Lower leg skin (tissue), 4 donors: ENCODE measurements at regions of chr11 and their contacts with region 1.

Region 1: DNA sequence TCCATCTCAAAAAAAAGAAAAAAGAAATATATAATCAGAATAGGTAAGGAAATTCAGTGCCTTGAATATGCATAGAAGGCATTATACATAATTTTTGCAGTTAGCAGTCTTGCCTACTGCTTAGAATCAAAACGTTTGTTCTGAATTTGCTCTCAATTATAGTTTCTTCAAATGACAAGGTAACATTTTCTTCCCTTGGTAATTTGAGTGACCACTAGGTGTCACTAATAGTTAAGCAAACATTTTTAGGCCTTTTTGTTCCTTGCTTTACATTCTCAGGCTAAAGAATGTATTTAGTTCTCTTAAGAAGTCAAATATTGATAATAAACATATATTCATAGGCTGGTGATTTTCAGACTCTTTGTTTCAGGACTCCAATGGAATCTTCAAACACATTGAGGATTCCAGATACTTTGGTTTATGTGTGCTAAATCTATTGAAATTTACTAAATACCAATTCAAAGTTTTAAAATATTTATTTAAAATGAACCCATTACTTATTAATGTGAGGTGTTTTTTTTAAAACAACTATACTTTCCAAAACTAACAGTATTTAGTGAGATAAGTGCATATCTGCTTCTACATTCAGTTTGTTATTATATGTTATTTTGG is 55.0 kb upstream of the DEPDC7 start:
- DNase-seq: no peak
- H3K4me3 ChIP-seq: no peak overlapping the region
- CTCF ChIP-seq: no peak
- POLR2A ChIP-seq: no peak

Region 2: GRCh38 chr11:33065445-33066178 is 105.0 kb after region 1 on chr11:
- intact Hi-C with region 1: loop called (anchors 5 kb)
- DNase-seq: peak; percentile 44 to 89
- H3K4me3 ChIP-seq: no peak overlapping the region
- CTCF ChIP-seq: peak in 1 of 3 donors; percentile 48
- POLR2A ChIP-seq: no peak